ENCODE measurements at regions of chr11 and their contacts with region 1.

Region 1: DNA sequence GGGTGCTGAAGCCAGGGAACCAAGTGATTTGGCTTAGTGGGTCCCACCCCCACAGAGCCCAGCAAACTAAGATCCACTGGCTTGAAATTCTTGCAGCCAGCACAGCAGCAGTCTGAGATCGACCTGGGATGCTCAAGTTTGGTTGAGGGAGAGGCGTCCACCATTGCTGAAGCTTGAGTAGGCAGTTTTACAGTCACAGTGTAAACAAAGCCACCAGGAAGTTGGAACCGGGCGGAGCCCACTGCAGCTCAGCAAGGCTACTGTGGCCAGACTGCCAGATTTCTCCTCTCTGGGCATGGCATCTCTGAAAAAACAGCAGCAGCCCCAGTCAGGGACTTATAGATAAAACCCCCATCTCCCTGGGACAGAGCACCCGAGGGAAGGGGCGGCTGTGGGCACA is 424.1 kb upstream of the TENM4 start:
- DNase-seq: no peak

Region 2: GRCh38 chr11:79783833-79784232 is 81.0 kb before region 1 on chr11:
- intact Hi-C with region 1: no loop called
- DNase-seq: no peak

Region 3: DNA sequence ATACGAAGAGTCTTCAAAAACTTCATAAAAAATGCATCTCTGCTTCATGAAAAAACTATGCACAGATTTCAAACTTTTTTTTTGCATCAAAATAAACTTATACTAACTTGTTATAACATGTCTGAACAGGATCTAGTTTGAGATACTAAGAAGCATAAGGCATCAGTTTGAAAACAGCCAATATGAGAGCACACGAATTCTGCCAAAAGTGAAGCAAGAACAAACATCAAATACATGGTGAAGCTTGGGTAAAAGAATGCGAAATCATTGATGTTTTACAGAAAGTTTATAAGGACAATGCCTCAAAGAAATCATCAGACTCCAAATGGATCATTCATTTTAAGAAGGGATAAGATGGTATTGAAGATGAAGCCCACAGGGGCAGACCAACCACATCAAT is 35.0 kb before region 1 on chr11:
- intact Hi-C with region 1: loop called in 1 of 2 experiments (anchors 5 kb)
- DNase-seq: no peak

Region 4: GRCh38 chr11:80054582-80055165 is 189.8 kb after region 1 on chr11:
- intact Hi-C with region 1: no loop called
- DNase-seq: no peak

Measured in posterior vena cava (tissue), 2 donors.